ENCODE measurements at regions of chr1 and their contacts with region 1.

Region 1: DNA sequence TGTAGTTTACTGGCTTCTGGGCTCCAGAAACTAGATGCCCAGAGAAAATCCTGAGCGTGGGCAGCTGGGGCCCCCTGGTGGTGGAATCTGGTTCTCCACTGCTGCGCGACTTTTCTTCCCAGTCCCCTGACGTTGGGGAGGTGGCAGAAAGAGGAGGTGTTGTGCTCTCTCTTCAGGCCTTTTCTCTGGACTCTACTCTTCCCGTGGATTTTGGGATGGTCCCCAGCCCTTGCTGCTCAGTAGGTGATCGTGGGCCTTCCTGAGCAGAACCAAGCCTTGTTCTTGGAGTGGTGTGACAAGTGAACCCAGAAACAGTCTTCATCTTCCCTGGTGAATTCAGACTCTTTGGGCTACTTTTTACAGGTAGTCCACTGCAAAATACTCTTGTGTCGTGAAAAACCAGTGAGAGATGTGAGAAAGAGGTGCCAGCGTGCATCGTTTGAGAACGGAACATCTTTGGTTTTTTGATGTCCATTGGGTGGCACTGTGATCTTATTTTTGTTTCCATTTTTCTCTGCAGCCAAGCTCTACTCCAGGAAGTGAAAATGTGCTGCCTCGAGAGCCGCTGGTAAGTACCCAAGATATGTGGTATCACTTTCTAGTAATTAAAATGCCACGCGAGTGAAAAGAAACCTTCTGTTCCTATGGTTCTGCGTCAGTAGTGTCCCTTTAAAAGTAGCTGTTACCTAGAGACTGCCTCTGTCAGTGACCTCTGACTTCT is 20.2 kb downstream of the PEX14 start:
- DNase-seq: no peak
- H3K4me3 ChIP-seq: peak overlapping the region; percentile 33
- H3K27me3 ChIP-seq: no peaks in the 10 kb centered on the region
- CTCF ChIP-seq: peak; percentile 95

Region 2: GRCh38 chr1:10378081-10378841 is 116.7 kb before region 1 on chr1:
- CTCF ChIA-PET with region 1: interaction called, 16 read pairs
- POLR2A ChIA-PET with region 1: no interaction called
- DNase-seq: no peak
- H3K4me3 ChIP-seq: no peak overlapping the region
- H3K27me3 ChIP-seq: no peaks in the 10 kb centered on the region
- CTCF ChIP-seq: no peak

Region 3: DNA sequence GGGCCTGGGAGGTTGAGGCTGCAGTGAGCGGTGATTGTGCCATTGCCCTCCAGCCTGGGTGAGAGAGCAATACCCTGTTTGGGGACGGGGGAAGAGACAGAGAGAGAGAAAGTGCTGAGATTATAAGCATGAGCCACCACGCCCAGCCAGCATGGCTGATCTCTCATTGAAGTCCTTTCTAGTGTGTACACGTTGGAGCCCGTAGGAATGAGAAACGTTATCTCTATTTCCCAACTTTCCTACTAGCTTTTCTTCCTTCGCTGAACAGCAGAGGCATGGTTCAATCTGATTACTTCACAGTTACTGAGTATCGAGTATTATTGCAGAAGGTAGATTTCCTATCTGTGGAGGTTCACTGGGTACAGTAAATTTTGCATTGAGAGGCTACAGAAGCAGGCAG is 15.6 kb before region 1 on chr1:
- CTCF ChIA-PET with region 1: interaction called, 19 read pairs
- POLR2A ChIA-PET with region 1: no interaction called
- DNase-seq: no peak
- H3K4me3 ChIP-seq: no peak overlapping the region
- H3K27me3 ChIP-seq: no peaks in the 10 kb centered on the region
- CTCF ChIP-seq: no peak

Region 4: DNA sequence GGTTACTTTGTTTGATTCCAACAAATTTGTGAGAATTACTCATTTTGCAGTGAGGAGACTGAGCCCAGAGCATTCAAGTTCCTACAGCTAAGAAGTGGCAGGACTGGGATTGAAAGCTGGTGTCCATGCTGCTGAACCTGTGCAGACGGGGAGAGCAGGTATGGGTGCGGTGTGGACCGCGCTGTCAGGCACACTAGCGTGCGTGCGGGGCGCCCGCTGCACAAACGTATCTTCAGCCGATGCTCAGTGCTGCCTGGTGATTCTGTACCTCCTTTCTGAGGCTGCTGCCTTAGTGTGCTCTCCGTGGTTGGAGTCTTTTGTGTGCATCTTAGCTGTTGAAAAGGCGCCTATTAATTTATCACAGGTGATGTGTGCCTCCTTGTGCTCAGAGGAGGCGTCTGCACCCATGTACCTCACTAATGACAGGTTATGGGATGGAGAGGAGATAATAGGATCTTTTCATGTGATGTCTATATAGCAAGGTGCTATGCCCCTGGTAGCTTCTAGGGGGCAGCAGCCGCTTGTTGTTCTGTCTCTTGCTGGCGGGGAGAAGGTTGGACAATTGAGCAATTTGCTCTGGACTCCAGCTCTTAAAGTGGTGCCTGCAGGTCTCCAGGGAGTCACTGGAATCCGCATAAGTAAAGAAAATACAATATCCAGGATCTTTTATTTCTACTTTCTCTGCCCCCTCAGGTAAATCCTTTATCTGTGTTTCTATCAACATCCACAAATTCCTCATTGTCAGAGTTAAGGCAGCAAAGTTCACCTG is 12.4 kb after region 1 on chr1:
- CTCF ChIA-PET with region 1: interaction called, 70 read pairs
- POLR2A ChIA-PET with region 1: no interaction called
- DNase-seq: no peak
- H3K4me3 ChIP-seq: no peak overlapping the region
- H3K27me3 ChIP-seq: no peaks in the 10 kb centered on the region
- CTCF ChIP-seq: peak; percentile 93

Region 5: DNA sequence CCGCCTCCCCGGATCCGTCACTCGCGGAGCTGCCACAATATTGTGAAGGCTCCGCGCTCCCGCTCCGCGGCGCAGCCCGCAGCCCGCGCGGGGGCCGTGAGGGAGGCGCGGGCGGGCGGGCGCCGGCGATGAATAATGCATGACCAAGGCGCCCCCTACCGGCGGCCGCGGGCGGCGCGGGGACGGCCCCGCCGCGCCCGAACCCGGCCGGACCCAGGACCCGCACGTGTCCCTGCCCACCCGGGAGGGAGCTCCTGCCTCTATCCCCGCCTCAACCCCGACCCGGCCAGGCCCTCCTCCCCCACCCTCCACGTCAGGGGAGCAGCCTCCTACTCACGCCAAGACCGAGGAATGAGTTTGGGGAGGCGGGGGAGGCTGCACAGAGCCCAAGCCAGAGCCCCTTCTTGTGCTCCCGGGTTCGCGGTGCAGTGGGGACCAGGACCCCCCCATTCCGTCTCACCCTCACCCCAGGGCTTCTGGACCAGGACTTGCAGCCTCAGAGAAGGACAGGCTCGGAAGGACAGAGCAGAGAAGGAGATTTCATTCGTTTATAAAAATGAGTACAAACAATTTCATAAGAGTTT is 372.3 kb after region 1 on chr1:
- CTCF ChIA-PET with region 1: interaction called, 51 read pairs
- POLR2A ChIA-PET with region 1: no interaction called
- DNase-seq: no peak
- H3K4me3 ChIP-seq: peak overlapping the region; percentile 41
- H3K27me3 ChIP-seq: peaks cover 21% of the 10 kb centered on the region
- CTCF ChIP-seq: 0 out of 2 replicates have a peak, but pooled peaks have one; percentile 4

Measured in BJ (cell line).